HEK293 (cell line): ENCODE measurements at regions of chr22 and their contacts with region 1.

Region 1: DNA sequence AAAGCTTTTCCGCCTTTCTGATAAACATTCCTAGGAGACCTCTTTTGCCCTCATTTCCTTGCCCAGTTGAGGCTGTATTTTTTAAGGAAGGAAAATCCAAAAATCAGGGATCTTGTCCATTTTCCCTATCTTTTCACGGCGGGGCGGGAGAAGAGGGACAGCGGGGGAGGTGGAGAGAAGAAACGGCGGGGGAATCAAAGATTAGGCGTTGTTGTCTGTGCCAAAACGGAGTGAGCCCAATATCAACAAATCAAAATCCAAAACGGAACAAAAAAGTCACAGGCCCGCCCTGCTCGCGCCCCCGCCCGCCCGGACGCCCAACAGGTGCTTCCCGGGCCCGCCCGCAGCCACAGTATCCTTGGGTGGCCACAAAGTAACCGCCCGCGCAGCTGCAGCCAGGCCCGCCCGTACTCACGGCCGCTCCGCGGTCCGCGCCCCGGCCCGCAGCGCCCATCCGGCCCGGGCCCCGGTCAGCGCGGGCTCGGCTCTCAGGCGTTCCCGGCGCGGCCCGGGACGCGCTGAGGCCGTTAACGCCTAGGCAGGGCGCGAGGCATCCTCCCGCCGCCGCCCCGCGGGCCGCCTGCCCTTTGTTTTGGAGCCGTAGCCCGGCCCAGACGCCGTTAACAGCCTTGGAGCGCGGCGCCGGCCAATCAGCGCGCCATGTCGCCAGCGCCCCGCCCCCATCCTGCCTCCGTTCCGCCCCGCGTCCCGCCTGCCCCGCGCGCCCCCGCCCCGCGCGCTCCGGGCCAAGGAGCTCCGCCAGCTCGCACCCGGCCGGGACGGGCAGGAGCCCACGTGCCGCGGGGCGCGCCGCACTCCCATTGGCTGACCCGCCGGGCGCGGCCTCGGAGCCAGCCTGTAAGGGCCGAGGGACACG is at the start of gene YPEL1:
- H3K4me3 ChIP-seq: peak within 1 kb of the TSS; percentile 44
- H3K27ac ChIP-seq: peak within 1 kb of the TSS; percentile 55
- H3K4me1 ChIP-seq: no peaks in the 10 kb centered on the region
- CTCF ChIP-seq: no peak

Region 2: GRCh38 chr22:21719024-21719423 is 16.4 kb before region 1 on chr22:
- CTCF ChIA-PET with region 1: interaction called, 4 read pairs
- POLR2A ChIA-PET with region 1: interaction called, 11 read pairs
- H3K4me3 ChIP-seq: no peak overlapping the region
- H3K27ac ChIP-seq: no peak overlapping the region
- H3K4me1 ChIP-seq: no peaks in the 10 kb centered on the region
- CTCF ChIP-seq: no peak

Region 3: DNA sequence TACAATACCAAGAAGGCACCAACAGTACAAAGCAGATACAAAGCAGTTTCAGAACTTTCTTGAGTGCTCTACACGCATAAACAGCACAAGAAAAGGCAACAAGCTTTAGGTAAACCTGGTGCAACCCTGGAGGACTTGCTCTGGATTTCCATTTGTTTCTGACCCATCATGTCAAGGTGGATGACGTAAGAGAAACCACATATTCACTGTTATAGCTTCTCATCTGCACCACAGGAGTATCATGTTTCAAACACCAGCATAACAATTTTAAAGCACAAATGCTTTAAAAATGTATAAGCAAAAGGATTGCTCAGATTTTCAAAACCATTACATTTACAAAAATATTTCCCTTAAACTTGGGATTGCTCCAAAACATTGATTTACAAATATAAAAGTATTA is 25.2 kb after region 1 on chr22:
- CTCF ChIA-PET with region 1: no interaction called
- POLR2A ChIA-PET with region 1: interaction called, 12 read pairs
- H3K4me3 ChIP-seq: no peak overlapping the region
- H3K27ac ChIP-seq: no peak overlapping the region
- H3K4me1 ChIP-seq: 0 out of 2 replicates have a peak, but pooled peaks cover 3% of the 10 kb centered on the region
- CTCF ChIP-seq: no peak